Cardiac septum (tissue), 1 donor: ENCODE measurements at regions of chr5 and their contacts with region 1.

Region 1: DNA sequence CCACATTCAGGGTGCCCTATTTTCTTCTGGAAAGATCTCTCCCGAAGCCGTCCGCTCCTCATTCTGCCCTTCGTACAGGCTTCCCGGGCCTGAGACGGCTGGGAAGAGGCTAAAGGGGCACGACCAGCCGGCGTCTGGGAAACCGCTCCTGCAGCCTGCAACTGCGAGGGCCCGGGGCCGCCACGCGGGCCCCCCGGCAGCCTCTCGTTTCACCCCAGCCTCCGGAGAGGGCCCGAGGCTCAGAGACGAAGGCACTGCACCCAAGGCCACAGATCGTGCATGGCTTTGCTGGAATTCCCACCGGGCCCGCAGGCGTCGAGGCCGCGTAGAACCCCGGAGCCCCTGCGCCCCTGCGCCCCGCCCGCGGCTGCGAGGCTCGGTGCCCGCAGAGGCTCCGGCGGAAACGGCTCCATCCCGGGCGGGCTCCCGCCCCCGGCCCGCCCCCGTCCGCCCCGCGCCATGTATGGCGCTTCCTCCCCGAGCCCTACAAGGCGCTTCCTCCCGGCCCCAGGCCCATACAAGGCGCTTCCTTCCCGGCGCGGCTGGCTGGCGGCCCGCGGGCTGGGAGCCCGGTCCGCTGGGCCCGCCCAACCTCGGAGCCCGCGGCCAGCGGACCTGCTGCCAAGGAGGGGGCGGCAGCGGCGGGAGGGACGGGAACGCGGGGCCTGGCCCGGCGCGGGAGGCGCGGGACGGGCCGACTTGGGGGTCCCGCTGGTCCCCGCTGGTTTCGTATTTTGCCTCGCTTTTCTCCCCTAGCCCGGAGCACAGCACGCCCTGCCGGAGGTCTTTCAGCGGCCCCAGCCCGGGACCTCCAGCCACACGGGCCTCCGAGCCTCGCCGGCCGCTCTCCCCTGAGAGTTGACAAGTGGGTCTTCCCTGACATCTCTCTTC is 26.6 kb downstream of the EGR1 start:
- DNase-seq: peak; percentile 97

Region 2: DNA sequence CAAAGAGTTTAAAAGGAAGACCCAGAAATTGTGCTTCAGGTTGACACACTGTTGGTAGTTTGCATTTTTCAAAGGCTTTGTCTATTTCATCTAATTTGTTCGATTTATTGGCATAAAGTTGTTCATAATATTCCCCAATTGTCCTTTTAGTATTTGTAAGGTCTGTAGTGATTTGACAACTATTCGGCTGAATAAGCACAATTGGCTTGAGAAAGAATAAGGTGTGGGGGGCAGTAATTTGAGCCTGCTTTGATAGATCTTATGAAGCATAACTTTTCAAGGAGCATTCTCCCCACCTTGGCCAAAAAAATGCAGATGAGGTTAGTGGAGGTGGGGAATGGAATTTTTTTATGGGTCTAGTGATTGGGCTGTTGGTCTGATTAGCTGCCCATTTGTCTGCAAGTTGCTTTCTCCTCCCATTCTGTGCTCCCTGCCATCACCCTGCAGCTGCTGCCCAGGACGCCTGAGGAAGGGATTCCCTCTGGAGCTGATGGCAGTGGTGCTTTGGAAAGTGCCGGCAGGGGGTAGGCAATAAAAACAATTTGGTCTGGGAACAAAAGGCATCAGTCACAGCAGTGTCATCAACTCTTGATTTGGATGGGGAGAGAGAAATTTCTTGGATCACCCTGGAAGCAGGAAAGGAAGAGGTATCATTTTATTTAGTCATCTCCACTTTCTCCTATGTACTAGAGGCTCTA is 381.5 kb before region 1 on chr5:
- intact Hi-C with region 1: no loop called
- DNase-seq: no peak

Region 3: GRCh38 chr5:138464008-138464387 is 27.9 kb before region 1 on chr5:
- intact Hi-C with region 1: loop called (anchors 1 kb)
- DNase-seq: peak; percentile 98

Region 4: GRCh38 chr5:138542956-138543729 is 51.2 kb after region 1 on chr5 and contains the start of gene ETF1:
- intact Hi-C with region 1: loop called (anchors 5 kb)
- DNase-seq: peak; percentile 100
- total RNA-seq, gene ETF1: 86.8 TPM